ENCODE measurements at regions of chr14 and their contacts with region 1.

Region 1: GRCh38 chr14:75577729-75578101 is 705 bp upstream of the FLVCR2 start:
- DNase-seq: peak; percentile 91
- ATAC-seq: peak; percentile 88

Region 2: GRCh38 chr14:75522224-75522982 is 55.3 kb before region 1 on chr14 and contains the start of gene BATF:
- intact Hi-C with region 1: no loop called
- DNase-seq: no peak
- ATAC-seq: peak; percentile 27
- total RNA-seq, gene BATF: 0.84 TPM

Region 3: GRCh38 chr14:75648066-75648838 is 70.5 kb after region 1 on chr14:
- intact Hi-C with region 1: loop called (anchors 1 kb)
- DNase-seq: no peak
- ATAC-seq: peak; percentile 87

Region 4: DNA sequence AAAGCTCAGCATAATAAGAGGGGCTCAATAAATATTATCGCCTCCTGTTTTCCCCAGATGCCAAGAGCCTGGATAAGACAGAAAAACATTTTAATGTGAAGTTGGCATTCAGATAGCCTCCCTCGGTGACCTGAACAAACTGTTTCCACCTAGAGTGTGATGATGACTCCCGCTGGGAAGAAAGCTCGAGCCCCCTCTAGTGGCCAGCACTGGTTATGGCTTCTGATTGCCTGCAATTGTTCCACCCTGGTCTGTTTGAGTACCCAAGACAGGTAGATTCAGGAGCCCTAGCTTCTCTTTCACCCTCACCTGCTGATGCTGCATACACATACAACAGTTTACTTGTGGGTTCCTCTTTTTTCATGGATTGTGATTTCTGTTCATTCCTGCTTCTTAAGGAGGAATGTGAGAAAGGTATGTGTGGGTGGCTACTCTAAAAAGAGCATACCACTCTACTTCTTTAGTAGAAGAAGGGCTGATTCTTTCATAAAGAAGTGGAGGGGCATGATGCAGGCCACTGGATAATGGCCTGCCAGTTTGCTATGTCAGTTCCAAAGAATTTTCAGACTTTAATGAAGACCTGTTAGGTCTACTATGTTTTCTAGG is 76.5 kb after region 1 on chr14:
- intact Hi-C with region 1: loop called (anchors 1 kb)
- DNase-seq: peak; percentile 83
- ATAC-seq: peak; percentile 87

Region 5: DNA sequence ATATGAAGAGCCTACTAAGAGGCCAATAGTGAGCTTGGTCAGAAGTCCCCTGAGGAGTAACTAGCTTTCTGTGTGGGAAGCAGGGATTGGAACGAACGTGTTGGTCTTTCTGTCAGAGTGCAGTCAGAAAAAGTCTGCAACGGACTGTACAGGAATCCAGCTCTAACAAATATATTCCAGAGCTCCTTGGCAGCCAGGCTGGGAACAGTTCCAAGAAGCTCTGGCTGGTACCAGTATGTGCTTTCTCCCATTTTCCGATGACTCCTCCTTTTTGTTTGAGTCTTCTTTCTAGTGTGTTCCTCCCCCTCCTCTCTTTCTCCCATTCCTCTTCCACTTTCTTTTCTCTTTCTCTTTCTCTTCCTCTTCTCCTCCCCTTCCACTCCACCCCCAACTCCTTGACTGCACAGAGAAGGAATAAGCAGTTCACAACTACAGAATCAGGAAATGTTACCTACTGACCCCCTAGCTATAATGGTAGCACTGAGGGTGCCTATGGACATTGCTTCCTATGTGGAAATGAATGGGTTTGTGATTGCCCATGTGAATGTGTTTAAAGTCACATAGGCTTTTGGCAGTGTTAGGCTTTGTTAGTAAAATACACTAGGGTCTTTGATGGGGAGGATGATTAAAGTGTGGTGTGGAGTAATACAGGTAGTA is 143.3 kb after region 1 on chr14:
- intact Hi-C with region 1: no loop called
- DNase-seq: peak; percentile 62
- ATAC-seq: peak; percentile 71

Region 6: DNA sequence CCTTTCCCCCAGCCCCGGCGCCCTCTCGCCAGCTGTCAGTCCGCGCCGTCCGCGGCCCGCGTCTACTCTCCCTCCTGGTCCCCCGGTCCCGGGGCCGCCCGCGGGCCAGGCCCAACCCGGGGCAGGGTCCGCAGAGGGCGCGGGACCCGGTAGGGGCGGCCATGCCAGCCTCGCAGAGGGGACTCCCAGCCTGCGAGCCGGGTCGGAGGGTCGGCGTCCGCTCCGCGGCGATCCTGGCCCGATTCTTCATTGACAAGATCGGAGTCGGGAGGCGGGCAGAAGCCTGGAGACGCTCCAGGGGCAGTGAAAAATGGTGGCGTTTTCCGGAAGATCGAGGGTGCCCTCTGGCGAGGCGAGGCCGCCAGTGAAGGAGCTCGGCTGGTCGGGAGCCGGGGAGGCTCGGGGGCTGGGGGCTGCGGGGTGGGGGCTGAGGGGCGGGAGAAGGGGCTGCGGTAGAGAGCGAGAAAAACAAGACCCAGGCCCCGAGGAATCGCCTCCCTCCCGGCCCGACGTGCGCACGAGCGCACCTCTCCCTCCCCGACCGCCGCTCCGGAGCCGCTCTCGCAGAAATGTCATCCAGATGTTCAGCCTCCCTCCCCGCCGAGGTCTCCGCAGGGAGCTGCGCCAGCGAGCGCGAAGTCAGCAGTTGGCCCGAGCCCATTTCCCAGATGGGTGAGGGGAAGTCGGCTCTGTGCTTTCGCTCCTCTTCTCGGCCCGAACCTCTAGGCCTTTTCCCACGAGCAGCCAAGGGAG is 404.7 kb after region 1 on chr14:
- intact Hi-C with region 1: loop called (anchors 10 kb)
- DNase-seq: peak; percentile 88
- ATAC-seq: peak; percentile 69